Activated CD4-positive, alpha-beta T cell treated with anti-CD3 and anti-CD28 coated beads for 36 hours (primary cell): ENCODE measurements at regions of chr1 and their contacts with region 1.

Region 1: DNA sequence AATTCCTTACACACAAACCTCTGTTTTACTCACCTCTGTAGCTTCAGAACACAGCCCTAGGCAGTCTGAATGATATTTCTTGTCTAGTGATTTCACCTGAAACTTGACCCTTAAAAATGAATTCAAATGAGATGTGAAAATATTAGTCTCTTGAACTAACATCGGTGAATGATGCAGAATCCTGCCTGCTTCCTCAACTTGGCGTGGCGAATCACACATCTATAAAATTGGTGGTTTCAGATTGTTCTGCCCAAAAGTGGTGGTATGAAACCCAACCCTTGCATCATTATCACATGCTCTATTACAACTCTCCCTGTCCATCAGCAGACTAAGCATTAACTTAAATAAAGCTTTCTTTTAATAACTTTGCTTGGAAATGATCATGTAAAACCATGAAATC is 26.9 kb upstream of the C1orf21 start:
- DNase-seq: no peak
- ATAC-seq: no peak
- H3K4me3 Mint-ChIP-seq: no peak overlapping the region
- H3K27ac Mint-ChIP-seq: no peak overlapping the region
- H3K4me1 Mint-ChIP-seq: no peaks in the 10 kb centered on the region
- H3K27me3 Mint-ChIP-seq: peaks cover 8% of the 10 kb centered on the region

Region 2: GRCh38 chr1:183702087-183702812 is 657.7 kb before region 1 on chr1:
- CTCF ChIA-PET with region 1: no interaction called
- POLR2A ChIA-PET with region 1: no interaction called
- intact Hi-C with region 1: no loop called
- DNase-seq: peak; percentile 27
- ATAC-seq: peak; percentile 83
- H3K4me3 Mint-ChIP-seq: no peak overlapping the region
- H3K27ac Mint-ChIP-seq: no peak overlapping the region
- H3K4me1 Mint-ChIP-seq: peaks cover 15% of the 10 kb centered on the region
- H3K27me3 Mint-ChIP-seq: no peaks in the 10 kb centered on the region

Region 3: GRCh38 chr1:184385865-184386311 is 26.0 kb after region 1 on chr1:
- CTCF ChIA-PET with region 1: no interaction called
- POLR2A ChIA-PET with region 1: no interaction called
- intact Hi-C with region 1: no loop called
- DNase-seq: no peak
- ATAC-seq: no peak
- H3K4me3 Mint-ChIP-seq: peak overlapping the region; percentile 66
- H3K27ac Mint-ChIP-seq: peak overlapping the region; percentile 38
- H3K4me1 Mint-ChIP-seq: peaks cover 12% of the 10 kb centered on the region
- H3K27me3 Mint-ChIP-seq: peaks cover 44% of the 10 kb centered on the region

Region 4: DNA sequence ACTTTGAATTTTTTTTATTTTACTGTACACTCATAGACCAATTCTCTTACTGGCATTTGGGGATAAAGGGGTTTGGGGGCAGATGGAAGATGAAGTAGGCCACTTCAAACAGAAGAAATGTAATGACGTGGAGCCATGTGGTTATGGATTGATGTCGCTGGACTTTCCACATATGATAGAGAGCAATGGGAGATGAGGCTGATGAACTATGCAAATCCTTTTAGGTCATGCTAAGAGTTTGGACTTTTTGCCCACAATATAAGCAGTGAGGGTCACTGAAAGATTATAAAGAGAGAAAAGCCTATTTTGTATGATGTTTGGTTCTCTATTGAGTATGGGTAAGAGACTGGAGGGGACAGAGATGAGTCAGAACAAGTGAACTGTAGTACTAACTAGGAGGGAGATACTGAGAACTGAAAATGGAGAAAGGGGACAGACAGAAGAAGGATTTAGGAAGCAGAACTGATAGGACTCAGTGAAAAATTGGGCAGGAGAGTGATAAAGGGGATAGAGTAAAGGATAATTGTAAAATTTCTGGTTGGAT is 36.1 kb after region 1 on chr1:
- CTCF ChIA-PET with region 1: no interaction called
- POLR2A ChIA-PET with region 1: no interaction called
- intact Hi-C with region 1: loop called in 1 of 2 experiments (anchors 1 kb)
- DNase-seq: no peak
- ATAC-seq: no peak
- H3K4me3 Mint-ChIP-seq: no peak overlapping the region
- H3K27ac Mint-ChIP-seq: no peak overlapping the region
- H3K4me1 Mint-ChIP-seq: no peaks in the 10 kb centered on the region
- H3K27me3 Mint-ChIP-seq: peaks cover 20% of the 10 kb centered on the region